BJ (cell line): ENCODE measurements at regions of chr9 and their contacts with region 1.

Region 1: DNA sequence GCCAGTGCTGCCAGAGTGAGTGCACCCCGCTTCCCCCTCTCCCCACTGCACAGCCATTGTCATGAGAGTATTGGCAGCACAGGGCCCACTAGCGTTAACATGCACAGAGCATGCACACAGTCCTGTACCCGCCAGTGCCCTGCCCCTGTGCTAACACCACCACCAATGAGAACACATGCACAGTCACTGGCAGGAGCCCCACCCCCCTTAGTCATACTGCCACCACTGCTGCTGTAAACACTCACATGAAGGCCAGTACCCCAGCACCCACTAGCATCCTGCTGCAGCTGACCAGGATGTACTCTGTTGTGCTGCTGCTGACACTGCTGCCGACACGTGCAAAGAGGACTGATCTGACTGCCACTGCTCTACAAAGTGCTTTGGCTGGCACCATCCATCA is 19.5 kb upstream of the RANBP6 start:
- DNase-seq: no peak
- H3K4me3 ChIP-seq: no peak overlapping the region
- H3K27me3 ChIP-seq: peaks cover 4% of the 10 kb centered on the region
- CTCF ChIP-seq: no peak

Region 2: GRCh38 chr9:6024020-6024554 is 10.9 kb before region 1 on chr9:
- CTCF ChIA-PET with region 1: interaction called, 15 read pairs
- POLR2A ChIA-PET with region 1: no interaction called
- DNase-seq: no peak
- H3K4me3 ChIP-seq: no peak overlapping the region
- H3K27me3 ChIP-seq: no peaks in the 10 kb centered on the region
- CTCF ChIP-seq: peak; percentile 54

Region 3: GRCh38 chr9:6080154-6080716 is 45.3 kb after region 1 on chr9:
- CTCF ChIA-PET with region 1: no interaction called
- POLR2A ChIA-PET with region 1: no interaction called
- DNase-seq: peak; percentile 68
- H3K4me3 ChIP-seq: peak overlapping the region; percentile 54
- H3K27me3 ChIP-seq: no peaks in the 10 kb centered on the region
- CTCF ChIP-seq: no peak; the same call in 1 of the 2 replicates